ENCODE measurements at regions of chr7 and their contacts with region 1.

Region 1: DNA sequence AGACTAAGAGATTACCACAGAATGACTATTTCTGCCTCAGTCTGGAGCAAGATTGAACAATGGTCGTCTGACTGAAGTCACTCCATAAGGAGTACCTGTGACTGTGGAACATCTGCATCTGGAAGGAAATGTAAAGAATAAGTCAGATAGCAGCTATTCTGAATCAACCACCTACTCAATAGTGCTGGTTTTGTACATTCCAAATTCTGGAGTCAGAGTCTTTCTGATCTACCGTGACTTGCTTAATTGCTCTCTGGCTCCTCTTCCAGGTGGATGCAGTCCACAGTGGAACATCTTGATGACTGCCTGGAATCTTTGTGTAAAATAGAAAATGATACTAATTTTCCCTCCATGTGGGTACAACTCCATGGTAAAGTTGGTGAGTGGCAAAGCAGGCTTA is 156.3 kb upstream of the SEMA3C start:
- DNase-seq: peak in 1 of 2 experiments; percentile 39
- H3K4me3 ChIP-seq: no peak overlapping the region
- H3K27ac ChIP-seq: peak overlapping the region; percentile 87; the same call in 1 of the 2 replicates
- H3K4me1 ChIP-seq: peaks cover 19% of the 10 kb centered on the region
- H3K27me3 ChIP-seq: no peaks in the 10 kb centered on the region
- CTCF ChIP-seq: no peak

Region 2: GRCh38 chr7:80722616-80723141 is 352.5 kb before region 1 on chr7:
- CTCF ChIA-PET with region 1: no interaction called
- POLR2A ChIA-PET with region 1: no interaction called
- intact Hi-C with region 1: loop called (anchors 1 kb)
- DNase-seq: peak; percentile 85 to 99
- H3K4me3 ChIP-seq: peak overlapping the region; percentile 20
- H3K27ac ChIP-seq: peak overlapping the region; percentile 89
- H3K4me1 ChIP-seq: peaks cover 38% of the 10 kb centered on the region
- H3K27me3 ChIP-seq: no peaks in the 10 kb centered on the region
- CTCF ChIP-seq: no peak

Region 3: DNA sequence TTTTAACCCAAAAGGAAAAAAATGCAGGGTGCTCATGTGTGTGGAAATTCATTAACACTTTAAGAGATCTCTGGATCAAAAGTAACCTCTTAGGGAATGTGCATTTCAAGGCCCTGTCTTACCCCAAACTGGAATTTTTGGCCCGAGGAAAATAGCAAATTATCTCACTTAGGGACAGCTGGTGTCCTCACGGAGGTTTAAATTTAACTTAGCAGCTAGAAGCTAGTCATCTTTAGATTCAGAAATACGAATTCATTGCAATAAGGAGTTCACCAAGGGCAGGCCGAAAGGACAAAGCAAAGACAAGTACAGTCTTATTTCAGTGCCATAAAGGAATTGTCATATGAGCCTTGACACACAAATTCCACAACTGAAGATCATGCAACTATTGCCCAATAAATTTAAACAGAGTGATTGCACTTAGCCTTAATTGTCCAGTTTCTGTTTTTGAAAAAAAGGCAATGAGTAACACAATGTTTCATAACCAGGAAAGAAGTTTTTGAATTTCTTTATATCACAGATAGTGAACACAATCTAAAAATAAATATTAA is 133.9 kb before region 1 on chr7:
- CTCF ChIA-PET with region 1: no interaction called
- POLR2A ChIA-PET with region 1: no interaction called
- intact Hi-C with region 1: loop called (anchors 1 kb)
- DNase-seq: peak in 1 of 2 experiments; percentile 71
- H3K4me3 ChIP-seq: no peak overlapping the region
- H3K27ac ChIP-seq: peak overlapping the region; percentile 98
- H3K4me1 ChIP-seq: peaks cover 39% of the 10 kb centered on the region
- H3K27me3 ChIP-seq: no peaks in the 10 kb centered on the region
- CTCF ChIP-seq: no peak

Region 4: DNA sequence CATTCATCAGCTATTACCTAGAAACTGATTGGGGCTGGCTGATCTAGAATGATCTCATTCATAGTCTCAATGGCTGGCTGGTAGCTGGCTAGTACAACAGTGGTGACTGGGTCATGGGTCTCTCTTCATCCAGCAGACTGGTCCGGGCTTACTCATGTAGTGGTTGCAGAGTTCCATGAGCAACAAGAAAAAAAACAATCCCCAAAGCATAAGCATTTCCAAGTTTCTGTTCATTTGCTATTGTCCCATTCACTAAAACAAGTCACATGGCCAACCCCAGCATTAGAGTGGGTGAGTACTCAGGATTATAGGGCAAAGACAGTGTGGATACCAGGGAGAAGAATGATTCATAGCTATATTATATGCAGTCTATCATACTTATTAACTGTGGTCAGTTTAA is 71.1 kb before region 1 on chr7:
- CTCF ChIA-PET with region 1: no interaction called
- POLR2A ChIA-PET with region 1: no interaction called
- intact Hi-C with region 1: no loop called
- DNase-seq: no peak
- H3K4me3 ChIP-seq: no peak overlapping the region
- H3K27ac ChIP-seq: no peak overlapping the region
- H3K4me1 ChIP-seq: no peaks in the 10 kb centered on the region
- H3K27me3 ChIP-seq: no peaks in the 10 kb centered on the region
- CTCF ChIP-seq: no peak

Region 5: GRCh38 chr7:81161458-81162075 is 86.4 kb after region 1 on chr7:
- CTCF ChIA-PET with region 1: no interaction called
- POLR2A ChIA-PET with region 1: no interaction called
- intact Hi-C with region 1: loop called (anchors 5 kb)
- DNase-seq: peak; percentile 54 to 66
- H3K4me3 ChIP-seq: no peak overlapping the region
- H3K27ac ChIP-seq: no peak overlapping the region
- H3K4me1 ChIP-seq: peaks cover 10% of the 10 kb centered on the region; the same call in 1 of the 2 replicates
- H3K27me3 ChIP-seq: no peaks in the 10 kb centered on the region
- CTCF ChIP-seq: no peak

Region 6: GRCh38 chr7:81285142-81285871 is 210.2 kb after region 1 on chr7:
- CTCF ChIA-PET with region 1: no interaction called
- POLR2A ChIA-PET with region 1: no interaction called
- intact Hi-C with region 1: loop called (anchors 1 kb)
- DNase-seq: peak; percentile 9 to 68
- H3K4me3 ChIP-seq: no peak overlapping the region
- H3K27ac ChIP-seq: peak overlapping the region; percentile 47
- H3K4me1 ChIP-seq: peaks cover 10% of the 10 kb centered on the region
- H3K27me3 ChIP-seq: no peaks in the 10 kb centered on the region
- CTCF ChIP-seq: no peak

Region 7: DNA sequence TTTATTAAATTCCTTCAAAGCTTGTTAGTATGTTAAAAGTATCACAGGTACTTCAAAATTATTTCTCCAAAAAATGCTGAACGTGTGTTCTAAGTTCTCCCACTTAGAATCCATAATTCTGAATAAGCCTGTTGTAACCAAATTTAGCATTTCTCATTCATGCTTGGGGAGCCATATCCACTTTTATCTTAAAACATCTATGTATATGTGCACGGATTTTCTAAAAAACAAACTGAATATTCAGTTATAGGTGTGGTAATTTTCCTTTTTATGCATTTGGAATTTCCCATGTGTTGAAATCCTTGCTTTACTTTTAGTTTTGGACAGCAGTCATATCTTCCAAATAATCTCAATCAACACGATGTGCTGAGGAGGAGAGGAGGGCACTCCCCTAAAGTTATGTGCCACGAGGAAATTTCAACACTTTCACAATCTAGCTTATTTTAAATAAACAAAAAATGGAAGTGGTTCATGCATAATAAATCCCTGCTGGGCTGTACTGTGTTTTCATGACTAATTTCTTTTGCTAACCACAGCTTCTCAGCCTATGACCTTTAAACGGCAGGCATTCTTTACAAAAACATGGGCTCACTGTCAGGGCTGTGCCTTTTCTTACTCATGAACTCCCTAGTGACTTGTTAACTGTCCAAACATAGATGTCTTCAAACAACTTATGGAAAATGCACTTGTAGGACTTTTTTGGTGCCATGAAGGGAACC is 224.0 kb after region 1 on chr7:
- CTCF ChIA-PET with region 1: no interaction called
- POLR2A ChIA-PET with region 1: no interaction called
- intact Hi-C with region 1: loop called (anchors 1 kb)
- DNase-seq: peak; percentile 45 to 94
- H3K4me3 ChIP-seq: peak overlapping the region; percentile 17; the same call in 1 of the 2 replicates
- H3K27ac ChIP-seq: peak overlapping the region; percentile 31
- H3K4me1 ChIP-seq: peaks cover 21% of the 10 kb centered on the region
- H3K27me3 ChIP-seq: no peaks in the 10 kb centered on the region
- CTCF ChIP-seq: no peak

Region 8: DNA sequence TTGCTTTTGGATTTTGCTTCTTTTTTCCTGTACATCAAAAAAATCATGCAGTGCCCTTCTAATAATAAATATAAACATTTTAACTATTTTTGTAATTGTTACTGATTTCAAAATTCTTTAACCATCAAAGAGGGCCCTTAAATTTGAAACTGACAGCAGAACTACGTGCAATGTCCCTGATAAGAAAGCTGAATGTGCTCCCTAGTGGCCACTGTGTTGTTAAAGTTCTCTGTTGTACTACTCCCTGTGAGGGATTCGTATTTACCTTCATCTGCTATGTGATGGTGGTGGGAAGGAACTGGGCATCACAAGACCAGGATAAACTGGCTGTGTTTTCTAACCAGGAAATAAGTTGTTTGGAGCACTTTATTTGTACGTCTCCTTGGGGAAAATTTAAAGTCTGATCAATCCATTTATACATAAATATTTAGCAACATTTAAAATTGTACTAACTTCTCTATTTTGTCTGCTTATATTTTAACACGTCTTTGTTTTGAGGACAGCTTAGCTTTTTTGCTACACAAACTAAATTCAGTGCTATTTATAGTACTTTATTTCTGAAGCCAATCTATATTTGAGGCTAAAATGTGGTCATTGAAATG is 372.3 kb after region 1 on chr7:
- CTCF ChIA-PET with region 1: no interaction called
- POLR2A ChIA-PET with region 1: no interaction called
- intact Hi-C with region 1: loop called (anchors 10 kb)
- DNase-seq: peak in 1 of 2 experiments; percentile 12
- H3K4me3 ChIP-seq: no peak overlapping the region
- H3K27ac ChIP-seq: no peak overlapping the region
- H3K4me1 ChIP-seq: no peaks in the 10 kb centered on the region
- H3K27me3 ChIP-seq: no peaks in the 10 kb centered on the region
- CTCF ChIP-seq: peak; percentile 64